ENCODE measurements at regions of chr11 and their contacts with region 1.

Region 1: DNA sequence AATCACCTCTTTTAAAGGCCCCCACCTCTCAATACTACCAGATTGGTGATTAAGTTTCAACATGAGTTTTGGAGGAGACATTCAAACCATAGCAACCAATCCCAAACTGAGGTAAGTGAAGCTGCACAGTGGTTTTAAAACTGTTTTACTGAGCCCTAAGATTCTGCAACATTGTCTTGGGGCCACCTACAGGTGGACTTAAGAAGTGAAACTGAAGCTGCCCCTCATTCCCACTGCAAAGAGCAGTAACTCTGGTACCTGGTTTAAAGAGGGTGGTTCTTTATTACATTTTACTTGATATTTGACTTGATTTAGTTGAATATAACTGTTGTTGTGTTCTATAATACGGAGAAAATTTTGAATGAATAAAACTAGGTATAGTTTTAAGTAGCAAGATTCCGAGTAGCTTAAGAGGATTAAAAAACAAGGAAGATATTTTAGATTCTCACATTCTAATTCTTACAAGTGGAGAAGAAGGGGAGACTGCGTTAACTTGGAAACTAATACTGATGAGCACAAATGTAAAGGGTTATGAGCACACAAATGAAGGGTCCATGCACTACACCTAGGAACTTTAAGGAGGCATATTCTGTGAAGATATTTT is 26.7 kb downstream of the SYT9 start:
- DNase-seq: peak; percentile 12
- H3K4me3 ChIP-seq: no peak overlapping the region
- CTCF ChIP-seq: peak; percentile 82

Region 2: GRCh38 chr11:7204778-7205177 is 73.6 kb before region 1 on chr11:
- in situ Hi-C with region 1: no loop called
- DNase-seq: peak; percentile 42
- H3K4me3 ChIP-seq: no peak overlapping the region
- CTCF ChIP-seq: no peak

Region 3: GRCh38 chr11:7239877-7240276 is 38.5 kb before region 1 on chr11:
- in situ Hi-C with region 1: loop called (anchors 5 kb)
- DNase-seq: no peak
- H3K4me3 ChIP-seq: no peak overlapping the region
- CTCF ChIP-seq: no peak